Gastrocnemius medialis (tissue), 4 donors: ENCODE measurements at regions of chr2 and their contacts with region 1.

Region 1: DNA sequence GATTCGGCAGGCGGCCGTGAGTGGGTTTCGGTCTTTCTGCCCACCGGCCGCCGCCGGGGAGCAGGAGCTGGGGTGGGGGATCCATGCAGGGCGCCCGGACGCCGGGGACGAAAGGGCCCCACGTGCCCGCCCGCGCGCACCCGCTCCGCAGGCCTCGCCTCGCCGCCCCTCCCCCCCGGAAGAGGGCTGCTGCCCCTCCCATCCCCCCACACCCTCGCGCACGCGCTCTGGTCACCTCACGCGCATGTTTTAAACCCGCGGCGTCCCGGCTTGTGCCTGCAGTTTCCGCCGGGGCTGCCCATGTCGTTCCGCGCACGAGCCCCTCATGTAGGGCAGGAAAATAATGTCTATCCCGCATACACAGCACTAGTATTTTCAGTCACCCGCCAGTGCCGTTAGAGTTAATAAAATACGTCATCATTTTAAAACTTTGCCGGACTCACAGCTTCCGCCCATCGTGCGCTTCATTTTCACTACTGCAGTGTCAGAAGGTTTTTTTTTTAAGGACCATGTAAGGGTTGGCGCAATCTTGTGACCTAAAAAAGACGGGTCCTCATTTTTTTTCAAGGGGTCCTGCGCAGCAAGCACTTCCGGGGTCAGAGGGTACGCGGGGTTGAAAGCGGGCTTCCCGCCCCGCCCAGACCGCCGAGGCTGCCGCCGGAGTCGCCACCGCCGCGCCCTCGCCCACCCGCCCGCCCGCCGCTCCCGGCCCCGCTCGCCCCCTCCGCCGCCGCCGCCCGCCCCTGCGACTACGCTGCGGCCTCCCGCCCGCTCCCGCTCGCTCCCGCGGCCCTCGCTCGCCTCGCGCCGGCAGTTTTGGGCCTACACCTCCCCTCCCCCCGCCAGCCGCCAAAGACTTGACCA is at the start of gene PCBP1:
- DNase-seq: peak; percentile 92 to 94
- ATAC-seq: peak; percentile 71 to 75
- H3K4me3 ChIP-seq: peak within 1 kb of the TSS; percentile 91 to 95 (median 92)
- H3K27ac ChIP-seq: peak within 1 kb of the TSS; percentile 98 to 100 (median 98)
- H3K4me1 ChIP-seq: peaks cover 30 to 34% of the 10 kb centered on the region in 2 donors
- H3K27me3 ChIP-seq: no peaks in the 10 kb centered on the region
- CTCF ChIP-seq: no peak
- POLR2A ChIP-seq: peak; percentile 90 to 93
- total RNA-seq, gene PCBP1: 178 to 296 (median 262) TPM

Region 2: GRCh38 chr2:70070541-70071268 is 16.4 kb before region 1 on chr2:
- in situ Hi-C with region 1: no loop called
- intact Hi-C with region 1: loop called (anchors 2 kb)
- DNase-seq: peak; percentile 71 to 78
- ATAC-seq: peak; percentile 86
- H3K4me3 ChIP-seq: peak overlapping the region; percentile 6 to 30 (median 19)
- H3K27ac ChIP-seq: peak overlapping the region; percentile 84 to 94 (median 88)
- H3K4me1 ChIP-seq: peaks cover 29 to 35% of the 10 kb centered on the region in 2 donors
- H3K27me3 ChIP-seq: no peaks in the 10 kb centered on the region
- CTCF ChIP-seq: peak; percentile 84 to 94 (median 87)
- POLR2A ChIP-seq: no peak

Region 3: GRCh38 chr2:70104231-70105111 is 17.4 kb after region 1 on chr2:
- in situ Hi-C with region 1: no loop called
- intact Hi-C with region 1: loop called (anchors 1 kb)
- DNase-seq: no peak
- ATAC-seq: no peak
- H3K4me3 ChIP-seq: no peak overlapping the region
- H3K27ac ChIP-seq: peak overlapping the region in 1 of 4 donors; percentile 33
- H3K4me1 ChIP-seq: peaks cover 7 to 24% of the 10 kb centered on the region in 2 donors
- H3K27me3 ChIP-seq: no peaks in the 10 kb centered on the region
- CTCF ChIP-seq: no peak
- POLR2A ChIP-seq: no peak

Region 4: GRCh38 chr2:70124983-70125480 is 38.0 kb after region 1 on chr2:
- in situ Hi-C with region 1: no loop called
- intact Hi-C with region 1: loop called (anchors 1 kb)
- DNase-seq: peak; percentile 43 to 64
- ATAC-seq: peak; percentile 29 to 36
- H3K4me3 ChIP-seq: peak overlapping the region; percentile 64 to 80 (median 74)
- H3K27ac ChIP-seq: peak overlapping the region; percentile 89 to 100 (median 98)
- H3K4me1 ChIP-seq: peaks cover 47 to 51% of the 10 kb centered on the region in 2 donors
- H3K27me3 ChIP-seq: no peaks in the 10 kb centered on the region
- CTCF ChIP-seq: peak in 1 of 5 experiments; percentile 15
- POLR2A ChIP-seq: peak; percentile 40 to 67

Region 5: DNA sequence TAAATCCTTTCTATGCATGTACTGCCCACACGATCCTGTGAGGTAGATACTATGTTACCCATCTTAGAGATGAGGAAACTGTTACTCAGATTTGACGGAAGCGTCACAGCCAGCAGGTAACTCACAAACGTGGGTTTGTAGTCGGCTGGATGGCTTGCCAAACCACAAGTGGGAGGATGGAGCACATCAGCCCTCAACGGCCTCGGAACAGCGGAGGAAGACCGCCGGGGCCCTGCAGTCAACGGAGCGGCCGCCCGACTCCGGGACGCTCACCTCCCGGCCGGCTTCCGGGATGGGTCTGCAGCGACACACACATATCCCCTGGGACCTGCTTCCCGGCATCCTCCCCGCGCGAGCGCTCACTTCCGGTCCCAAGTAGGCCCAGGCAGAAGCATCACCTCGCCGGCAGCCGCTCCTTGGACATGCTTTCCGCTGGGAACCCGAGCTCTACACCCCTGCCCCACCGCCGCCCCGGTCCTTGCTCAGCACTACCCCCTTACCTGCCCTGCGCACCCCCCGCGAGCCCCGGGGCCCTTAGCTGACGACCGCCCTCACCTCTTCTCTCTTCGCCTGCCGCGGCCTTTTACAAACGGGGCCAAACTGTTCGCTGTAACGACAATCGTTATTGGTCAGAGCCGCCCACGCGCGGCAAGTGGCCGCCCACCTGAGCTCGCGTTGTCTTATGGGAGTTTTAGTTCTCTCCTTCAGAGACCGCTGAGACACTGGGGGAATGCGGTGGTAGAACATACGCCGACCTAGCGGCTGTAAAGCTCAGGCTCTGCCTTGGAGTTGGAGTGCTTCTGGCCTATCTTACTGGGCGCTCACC is 103.6 kb after region 1 on chr2 and contains the start of gene C2orf42:
- in situ Hi-C with region 1: no loop called
- intact Hi-C with region 1: loop called (anchors 2 kb)
- DNase-seq: peak; percentile 94 to 97
- ATAC-seq: peak; percentile 98
- H3K4me3 ChIP-seq: peak within 1 kb of the TSS; percentile 72 to 96 (median 88)
- H3K27ac ChIP-seq: peak within 1 kb of the TSS; percentile 92 to 99 (median 92)
- H3K4me1 ChIP-seq: peaks cover 4 to 6% of the 10 kb centered on the region in 2 donors
- H3K27me3 ChIP-seq: no peaks in the 10 kb centered on the region
- CTCF ChIP-seq: no peak
- POLR2A ChIP-seq: peak; percentile 91 to 97
- total RNA-seq, gene C2orf42: 6.3 to 10.1 (median 7.3) TPM

Region 6: DNA sequence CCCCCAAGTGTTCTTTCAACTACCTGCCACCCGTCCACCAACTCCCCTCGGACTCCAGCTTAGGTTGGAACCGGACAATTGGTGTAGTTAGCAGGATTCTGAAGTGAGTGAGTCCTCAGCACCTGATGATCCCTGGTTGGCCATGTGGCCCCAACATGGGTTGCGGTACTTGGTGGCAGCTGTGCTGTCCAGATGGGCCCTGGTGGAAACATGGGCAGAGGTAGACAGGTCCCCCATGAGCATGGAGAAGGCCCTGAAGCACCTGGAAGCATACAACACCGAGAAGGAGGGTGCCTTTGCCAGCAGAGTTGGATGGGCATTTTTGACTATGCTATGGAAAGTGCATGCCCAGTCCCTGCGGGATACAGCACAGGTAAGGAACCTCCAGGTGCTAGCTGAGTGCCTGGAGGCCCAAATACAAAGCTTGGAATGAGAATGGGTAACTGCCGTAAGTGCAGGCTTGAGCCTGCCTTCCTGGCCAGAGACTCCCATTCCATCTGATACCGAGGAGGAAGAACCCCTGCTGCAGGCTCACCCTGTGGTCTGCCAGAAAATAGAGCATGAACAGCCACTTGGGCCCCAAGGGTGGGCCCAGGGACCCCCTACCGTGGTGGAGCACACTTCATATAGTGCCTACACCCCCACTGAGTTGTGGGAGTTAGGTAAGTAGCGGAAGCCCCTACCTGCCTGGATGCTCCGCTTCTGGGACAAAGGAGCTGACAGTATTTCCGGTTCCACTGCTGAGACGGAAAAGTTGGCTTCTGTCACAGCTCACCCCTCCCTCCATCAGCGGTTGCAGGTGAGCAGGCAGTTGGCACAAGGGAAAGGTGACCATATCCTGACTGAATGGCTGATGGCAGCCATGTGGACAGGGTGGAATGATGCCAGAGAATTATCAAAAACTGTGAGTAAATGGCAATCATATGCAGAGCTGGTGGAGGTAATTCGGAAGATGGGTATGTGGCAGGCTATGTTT is 115.0 kb after region 1 on chr2:
- in situ Hi-C with region 1: no loop called
- intact Hi-C with region 1: no loop called
- DNase-seq: no peak
- ATAC-seq: no peak
- H3K4me3 ChIP-seq: no peak overlapping the region
- H3K27ac ChIP-seq: no peak overlapping the region
- H3K4me1 ChIP-seq: no peaks in the 10 kb centered on the region
- H3K27me3 ChIP-seq: no peaks in the 10 kb centered on the region
- CTCF ChIP-seq: no peak
- POLR2A ChIP-seq: no peak

Region 7: DNA sequence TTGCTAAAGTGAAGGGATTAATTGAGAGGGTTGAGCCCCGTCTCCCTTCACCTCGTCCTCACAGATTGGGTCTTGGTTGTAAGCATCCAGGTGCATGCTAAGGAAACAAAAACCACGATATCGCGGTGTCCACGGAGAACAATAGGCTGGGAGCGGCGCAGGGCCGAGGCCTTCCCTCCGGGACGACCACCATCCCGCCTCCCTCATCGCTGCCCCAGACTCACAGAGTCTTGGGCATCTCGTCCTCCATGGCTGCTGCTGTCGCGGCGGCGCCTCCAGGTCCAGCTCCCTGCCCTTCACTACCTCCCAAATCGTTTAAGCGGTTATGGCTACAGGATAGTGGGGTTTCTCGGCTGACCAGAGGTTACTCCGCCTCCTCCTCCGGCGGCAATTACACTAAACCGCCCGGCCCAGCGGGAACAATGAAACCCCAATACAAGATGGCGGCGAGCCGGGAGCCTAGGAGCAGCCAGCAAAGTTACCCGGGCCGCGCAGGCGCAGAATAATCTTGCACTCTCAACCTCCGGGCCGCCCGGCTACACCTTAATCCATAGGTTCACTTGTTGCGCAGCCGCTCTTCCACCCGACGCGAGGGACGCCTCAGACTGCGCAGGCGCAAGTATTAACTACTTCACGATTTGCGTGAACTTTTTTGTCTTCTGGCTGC is 161.2 kb after region 1 on chr2 and contains the start of gene TIA1:
- in situ Hi-C with region 1: no loop called
- intact Hi-C with region 1: loop called (anchors 5 kb)
- DNase-seq: peak; percentile 97 to 98
- ATAC-seq: peak; percentile 96 to 97
- H3K4me3 ChIP-seq: peak within 1 kb of the TSS; percentile 87 to 99 (median 92)
- H3K27ac ChIP-seq: peak within 1 kb of the TSS; percentile 94 to 99 (median 95)
- H3K4me1 ChIP-seq: peaks cover 21 to 27% of the 10 kb centered on the region in 2 donors
- H3K27me3 ChIP-seq: no peaks in the 10 kb centered on the region
- CTCF ChIP-seq: no peak
- POLR2A ChIP-seq: peak; percentile 65 to 73
- total RNA-seq, gene TIA1: 20.2 to 54.8 (median 26.6) TPM